PC-3 (cell line): ENCODE measurements at regions of chr10 and their contacts with region 1.

Region 1: DNA sequence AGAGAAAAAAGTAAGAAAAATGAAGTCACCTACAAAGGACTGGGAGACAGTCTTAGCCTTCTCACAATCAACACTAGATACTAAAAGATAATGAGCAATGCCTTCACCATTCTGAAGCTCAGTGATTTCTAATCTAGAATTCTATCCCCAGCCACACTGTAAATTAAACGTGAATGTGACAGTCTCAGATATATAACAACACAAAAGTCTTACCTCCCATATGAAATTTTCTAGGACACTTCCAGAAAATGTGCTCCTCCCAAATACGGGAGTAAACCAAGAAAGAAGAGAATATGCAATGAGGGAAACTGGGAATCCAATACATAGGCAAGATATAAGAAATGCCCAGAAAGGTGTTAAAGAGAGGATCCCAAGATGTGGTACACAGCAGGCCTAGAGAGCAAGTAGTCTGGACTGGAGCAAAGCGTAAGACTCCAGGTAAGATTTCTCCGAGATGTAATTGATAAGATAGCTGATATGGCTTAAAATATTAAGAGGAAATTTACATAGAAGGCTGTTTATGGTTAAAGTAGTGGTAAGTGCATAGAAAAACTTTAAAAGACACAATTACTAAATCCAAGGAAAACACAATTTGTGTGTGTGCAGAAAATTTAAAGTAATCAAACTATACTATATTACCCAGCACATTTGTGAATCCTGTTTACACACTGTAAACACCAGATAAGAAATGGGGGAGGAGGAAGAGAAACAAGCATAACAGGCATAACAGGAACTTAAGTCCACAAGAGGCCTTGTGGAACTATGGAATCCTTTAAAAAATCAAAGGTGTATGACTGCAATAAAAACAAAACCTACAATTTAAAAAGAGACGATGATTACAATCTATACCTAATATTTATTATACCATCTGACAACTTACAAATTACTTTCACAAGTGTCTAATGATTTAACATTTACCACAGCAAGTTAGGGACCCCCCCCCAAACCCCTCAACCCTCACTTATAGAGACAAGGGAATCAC is 44.0 kb downstream of the SGMS1 start:
- DNase-seq: peak; percentile 96
- ATAC-seq: peak; percentile 63
- H3K4me3 ChIP-seq: peak overlapping the region; percentile 20
- H3K27ac ChIP-seq: peak overlapping the region; percentile 28
- H3K4me1 ChIP-seq: peaks cover 52% of the 10 kb centered on the region
- H3K27me3 ChIP-seq: no peaks in the 10 kb centered on the region
- CTCF ChIP-seq: no peak

Region 2: DNA sequence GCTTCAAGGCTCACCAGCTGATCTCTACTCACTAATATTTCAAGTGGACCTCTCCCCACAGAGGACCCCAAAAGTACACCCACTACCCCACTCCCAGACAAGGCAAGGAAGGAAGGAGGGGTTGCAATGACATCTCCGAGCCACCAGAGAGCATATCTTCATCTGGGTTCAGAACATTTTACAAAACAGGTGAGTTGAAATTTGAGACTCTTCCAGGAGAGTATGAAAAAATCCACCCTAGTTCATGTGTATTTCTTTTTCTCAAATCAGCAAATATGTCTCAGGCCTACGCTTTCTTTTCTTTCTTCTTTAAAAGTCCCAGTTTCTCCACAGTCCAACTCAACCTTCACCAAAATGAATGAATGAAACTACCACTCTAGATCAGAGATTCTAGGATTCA is 18.0 kb before region 1 on chr10:
- CTCF ChIA-PET with region 1: interaction called, 4 read pairs
- POLR2A ChIA-PET with region 1: no interaction called
- intact Hi-C with region 1: loop called (anchors 2 kb)
- DNase-seq: peak; percentile 87
- ATAC-seq: peak; percentile 81
- H3K4me3 ChIP-seq: no peak overlapping the region
- H3K27ac ChIP-seq: no peak overlapping the region
- H3K4me1 ChIP-seq: peaks cover 13% of the 10 kb centered on the region
- H3K27me3 ChIP-seq: no peaks in the 10 kb centered on the region
- CTCF ChIP-seq: peak; percentile 100